Psoas muscle (tissue), 8 donors: ENCODE measurements at regions of chr6 and their contacts with region 1.

Region 1: GRCh38 chr6:108541838-108542759 is 18.6 kb upstream of the FOXO3 start:
- DNase-seq: peak; percentile 62 to 83
- ATAC-seq: peak; percentile 86 to 94 (median 90)
- H3K4me3 ChIP-seq: peak overlapping the region; percentile 14
- H3K27ac ChIP-seq: peak overlapping the region; percentile 67
- H3K4me1 ChIP-seq: peaks cover 28% of the 10 kb centered on the region
- H3K27me3 ChIP-seq: no peaks in the 10 kb centered on the region
- CTCF ChIP-seq: peak; percentile 88

Region 2: GRCh38 chr6:108492131-108492766 is 49.9 kb before region 1 on chr6:
- intact Hi-C with region 1: no loop called
- DNase-seq: no peak
- ATAC-seq: peak; percentile 64 to 85 (median 66)
- H3K4me3 ChIP-seq: no peak overlapping the region
- H3K27ac ChIP-seq: no peak overlapping the region
- H3K4me1 ChIP-seq: no peaks in the 10 kb centered on the region
- H3K27me3 ChIP-seq: no peaks in the 10 kb centered on the region
- CTCF ChIP-seq: peak; percentile 57

Region 3: GRCh38 chr6:108782179-108783041 is 240.3 kb after region 1 on chr6:
- intact Hi-C with region 1: loop called in 1 of 2 experiments (anchors 1 kb)
- DNase-seq: peak; percentile 81 to 91
- ATAC-seq: peak; percentile 94 to 98 (median 96)
- H3K4me3 ChIP-seq: peak overlapping the region; percentile 65
- H3K27ac ChIP-seq: peak overlapping the region; percentile 13
- H3K4me1 ChIP-seq: peaks cover 3% of the 10 kb centered on the region
- H3K27me3 ChIP-seq: no peaks in the 10 kb centered on the region
- CTCF ChIP-seq: peak; percentile 68

Region 4: GRCh38 chr6:108835218-108835850 is 293.2 kb after region 1 on chr6:
- intact Hi-C with region 1: loop called (anchors 1 kb)
- DNase-seq: peak; percentile 88 to 93
- ATAC-seq: peak; percentile 97 to 99 (median 98)
- H3K4me3 ChIP-seq: no peak overlapping the region
- H3K27ac ChIP-seq: no peak overlapping the region
- H3K4me1 ChIP-seq: no peaks in the 10 kb centered on the region
- H3K27me3 ChIP-seq: no peaks in the 10 kb centered on the region
- CTCF ChIP-seq: peak; percentile 97

Region 5: GRCh38 chr6:108896111-108896661 is 354.1 kb after region 1 on chr6:
- intact Hi-C with region 1: loop called (anchors 2 kb)
- DNase-seq: no peak
- ATAC-seq: peak in 1 of 4 donors; percentile 39
- H3K4me3 ChIP-seq: no peak overlapping the region
- H3K27ac ChIP-seq: peak overlapping the region; percentile 78
- H3K4me1 ChIP-seq: peaks cover 37% of the 10 kb centered on the region
- H3K27me3 ChIP-seq: no peaks in the 10 kb centered on the region
- CTCF ChIP-seq: no peak